Posterior cingulate gyrus (tissue), 11 donors: ENCODE measurements at regions of chr10 and their contacts with region 1.

Region 1: DNA sequence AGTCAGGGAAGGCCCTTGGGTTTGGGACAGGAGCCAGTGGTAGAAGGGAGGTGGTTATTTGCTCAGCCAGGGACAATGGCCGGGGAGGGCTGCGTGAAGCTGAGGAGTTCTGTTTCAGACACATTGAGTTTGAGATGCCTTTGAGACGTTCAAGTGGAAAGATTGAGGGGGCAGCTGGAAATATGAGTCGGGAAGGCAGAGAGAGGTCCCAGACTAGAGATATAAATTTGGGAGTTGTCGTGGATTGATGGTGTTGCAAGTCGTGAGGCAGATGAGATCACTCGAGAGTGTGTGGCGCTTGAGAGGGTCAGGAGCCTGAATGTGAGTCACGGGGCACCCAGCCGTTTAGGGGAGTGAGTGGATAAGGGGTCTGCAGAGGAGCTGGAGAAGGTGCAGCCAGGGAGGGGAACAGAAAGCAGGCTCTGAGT is 73.3 kb downstream of the ZMIZ1 start:
- DNase-seq: no peak

Region 2: GRCh38 chr10:79068562-79069324 is 73.3 kb before region 1 on chr10 and contains the start of gene ZMIZ1:
- intact Hi-C with region 1: loop called (anchors 5 kb)
- DNase-seq: peak; percentile 75 to 97 (median 84)

Region 3: GRCh38 chr10:79184145-79184625 is 42.1 kb after region 1 on chr10:
- intact Hi-C with region 1: no loop called
- DNase-seq: no peak